Dorsolateral prefrontal cortex (tissue), 120 donors: ENCODE measurements at regions of chr14 and their contacts with region 1.

Region 1: DNA sequence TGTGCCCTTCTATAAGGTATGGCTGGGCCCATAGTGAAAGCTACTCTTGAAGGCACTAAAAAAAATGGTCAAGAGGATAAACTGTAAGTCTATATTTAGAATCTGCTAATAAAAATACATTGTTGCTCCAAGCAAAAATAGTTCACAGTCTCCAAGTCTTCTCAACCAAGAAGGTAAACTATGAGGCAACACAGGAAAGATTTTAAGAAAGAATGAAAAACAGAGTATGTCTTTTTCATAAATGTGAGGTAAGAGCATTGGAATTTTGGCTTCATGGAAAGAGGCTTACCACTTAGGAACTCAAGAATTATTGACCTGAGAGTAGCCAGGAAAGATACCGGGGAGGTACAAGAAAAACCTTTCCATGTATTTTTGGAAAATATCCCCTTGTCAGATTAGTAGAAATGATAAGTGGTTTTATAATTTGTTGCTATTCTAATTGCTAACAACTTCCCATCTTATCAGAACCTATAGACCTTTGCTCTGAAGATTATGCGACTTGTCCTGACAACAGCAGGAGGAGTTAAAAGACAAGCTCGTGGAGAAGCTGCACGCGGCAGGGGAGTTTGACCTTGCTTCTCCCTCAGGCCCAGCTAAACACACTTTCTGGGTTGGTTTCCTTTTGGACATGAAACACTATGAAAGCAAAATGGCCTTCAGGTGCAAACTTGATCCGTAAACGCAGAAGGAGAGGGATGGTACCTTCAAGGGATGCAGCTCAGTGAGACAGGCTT is 238.1 kb downstream of the FOXN3 start:
- DNase-seq: no peak
- H3K4me3 ChIP-seq: no peak overlapping the region
- H3K27ac ChIP-seq: peak overlapping the region in 1 of 59 donors; percentile 96
- H3K27me3 ChIP-seq: no peaks in the 10 kb centered on the region
- CTCF ChIP-seq: no peak

Region 2: GRCh38 chr14:89226801-89227495 is 48.0 kb after region 1 on chr14:
- intact Hi-C with region 1: loop called in 1 of 2 experiments (anchors 5 kb)
- DNase-seq: peak in 1 of 10 donors; percentile 52
- H3K4me3 ChIP-seq: peak overlapping the region in 1 of 59 donors; percentile 14
- H3K27ac ChIP-seq: peak overlapping the region in 11 of 59 donors; percentile 0 to 60 (median 27)
- H3K27me3 ChIP-seq: no peaks in the 10 kb centered on the region
- CTCF ChIP-seq: no peak

Region 3: GRCh38 chr14:89303457-89304435 is 124.8 kb after region 1 on chr14:
- intact Hi-C with region 1: no loop called
- DNase-seq: peak in 4 of 10 donors; percentile 46 to 60 (median 50)
- H3K4me3 ChIP-seq: peak overlapping the region in 45 of 59 donors; percentile 0 to 50 (median 24)
- H3K27ac ChIP-seq: peak overlapping the region; percentile 32 to 97 (median 87)
- H3K27me3 ChIP-seq: no peaks in the 10 kb centered on the region
- CTCF ChIP-seq: peak in 1 of 56 donors; percentile 4

Region 4: DNA sequence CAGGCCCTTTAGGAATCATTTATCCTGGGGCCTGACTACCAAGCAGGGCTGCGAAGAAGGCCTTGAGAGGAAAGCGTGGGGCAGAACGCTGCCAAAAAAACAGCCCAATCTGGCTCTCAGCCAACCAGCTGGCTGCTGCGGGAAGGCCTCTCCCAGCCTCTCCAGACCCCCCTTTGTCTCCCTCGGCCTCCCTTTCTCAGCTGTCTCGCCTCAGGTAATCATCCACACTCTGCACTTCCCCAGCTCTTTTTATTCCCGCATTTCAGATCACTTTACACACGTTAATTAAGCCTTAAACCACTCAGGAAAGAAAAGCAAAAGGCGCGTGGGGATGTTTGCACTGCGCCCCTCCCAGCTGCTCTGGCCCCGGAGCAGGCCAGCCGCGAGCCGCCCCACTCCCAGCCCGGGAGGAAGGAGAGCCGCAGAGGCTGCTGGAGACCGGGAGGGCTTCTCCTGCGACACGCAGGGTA is 446.3 kb after region 1 on chr14:
- intact Hi-C with region 1: loop called in 1 of 2 experiments (anchors 10 kb)
- DNase-seq: peak in 5 of 10 donors; percentile 14 to 55 (median 39)
- H3K4me3 ChIP-seq: peak overlapping the region in 50 of 59 donors; percentile 0 to 58 (median 34)
- H3K27ac ChIP-seq: peak overlapping the region in 7 of 59 donors; percentile 2 to 41 (median 39)
- H3K27me3 ChIP-seq: no peaks in the 10 kb centered on the region
- CTCF ChIP-seq: no peak